ENCODE measurements at regions of chr1 and their contacts with region 1.

Region 1: DNA sequence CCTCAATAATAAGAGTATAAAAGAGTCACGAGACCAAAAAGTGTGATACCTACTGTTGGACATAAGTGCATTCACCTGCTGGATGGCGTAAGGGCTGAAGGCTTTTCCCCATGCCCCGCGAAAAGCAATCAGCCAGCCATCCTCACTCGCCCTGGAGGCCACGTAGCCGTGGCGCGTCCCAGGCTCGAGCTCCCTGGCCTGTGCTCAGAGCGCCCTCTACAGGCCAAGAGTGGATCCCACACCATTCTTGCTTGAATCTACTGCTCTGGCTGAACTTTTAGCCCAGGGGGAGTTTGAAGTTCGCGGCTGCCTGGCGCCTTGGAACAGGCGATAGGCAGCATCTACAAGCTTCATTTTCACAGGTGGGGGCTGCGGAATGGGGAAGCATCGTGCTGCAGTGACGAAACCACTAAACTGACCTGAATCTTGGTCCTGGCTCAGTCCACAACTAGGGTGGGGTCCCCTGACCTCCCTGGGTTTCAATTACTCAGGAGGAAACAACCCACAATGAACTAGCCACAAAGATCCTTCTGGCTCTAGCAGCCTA is 70.3 kb upstream of the SERBP1 start:
- DNase-seq: peak; percentile 31 to 91
- H3K4me3 ChIP-seq: no peak overlapping the region
- H3K27ac ChIP-seq: no peak overlapping the region
- H3K4me1 ChIP-seq: no peaks in the 10 kb centered on the region
- H3K27me3 ChIP-seq: no peaks in the 10 kb centered on the region
- CTCF ChIP-seq: peak; percentile 93 to 98 (median 96)

Region 2: GRCh38 chr1:66533804-66534740 is 966.4 kb before region 1 on chr1 and contains the start of gene SGIP1:
- intact Hi-C with region 1: no loop called
- DNase-seq: peak; percentile 46 to 88
- H3K4me3 ChIP-seq: peak within 1 kb of the TSS; percentile 58 to 71
- H3K27ac ChIP-seq: peak within 1 kb of the TSS; percentile 92 to 95
- H3K4me1 ChIP-seq: peaks cover 3 to 7% of the 10 kb centered on the region in 2 donors
- H3K27me3 ChIP-seq: no peaks in the 10 kb centered on the region
- CTCF ChIP-seq: no peak
- total RNA-seq, gene SGIP1: 1.6 TPM

Region 3: GRCh38 chr1:67214420-67215174 is 285.9 kb before region 1 on chr1:
- intact Hi-C with region 1: loop called (anchors 2 kb)
- DNase-seq: no peak
- H3K4me3 ChIP-seq: no peak overlapping the region
- H3K27ac ChIP-seq: no peak overlapping the region
- H3K4me1 ChIP-seq: no peaks in the 10 kb centered on the region
- H3K27me3 ChIP-seq: no peaks in the 10 kb centered on the region
- CTCF ChIP-seq: peak in 2 of 3 experiments; percentile 26 to 42

Region 4: DNA sequence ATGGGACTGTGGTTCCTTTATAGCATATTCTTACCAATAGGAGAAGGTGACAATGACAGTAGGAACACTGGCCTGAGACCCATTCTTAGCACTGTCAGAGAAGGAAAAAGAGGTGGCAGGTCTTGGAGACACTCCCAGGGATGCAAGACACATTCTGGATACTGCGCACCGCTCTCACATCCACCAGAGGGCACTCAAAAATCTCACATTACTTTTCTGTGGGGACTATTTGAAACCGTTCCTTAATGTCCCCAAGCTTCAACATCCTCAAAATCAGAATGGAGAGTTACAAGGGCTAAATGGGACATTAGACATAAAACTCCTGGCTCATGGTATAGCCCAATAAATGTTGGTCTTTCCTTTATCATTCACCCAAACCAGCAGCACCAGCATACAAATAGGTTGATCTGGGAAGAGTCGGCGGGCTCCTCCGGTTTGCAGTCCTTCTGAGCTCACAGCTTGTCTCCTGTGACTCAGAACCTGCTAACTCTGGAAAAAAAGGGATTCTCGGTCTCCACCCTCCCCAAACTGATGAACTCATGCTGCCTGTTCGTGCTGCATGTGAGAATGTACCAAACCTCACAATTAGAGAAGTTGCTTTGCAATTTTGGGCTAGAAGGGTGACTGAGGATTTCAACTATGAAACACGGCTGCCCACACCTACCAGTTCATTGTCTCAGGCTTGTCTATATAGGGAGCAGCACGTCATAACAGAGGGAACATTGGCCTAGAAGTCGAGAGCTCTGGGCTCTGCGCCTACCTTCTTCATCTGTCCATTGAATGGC is 152.6 kb before region 1 on chr1:
- intact Hi-C with region 1: loop called (anchors 1 kb)
- DNase-seq: no peak
- H3K4me3 ChIP-seq: no peak overlapping the region
- H3K27ac ChIP-seq: no peak overlapping the region
- H3K4me1 ChIP-seq: no peaks in the 10 kb centered on the region
- H3K27me3 ChIP-seq: no peaks in the 10 kb centered on the region
- CTCF ChIP-seq: peak; percentile 51 to 79 (median 53)

Region 5: GRCh38 chr1:67489643-67490042 is 10.8 kb before region 1 on chr1:
- intact Hi-C with region 1: no loop called
- DNase-seq: no peak
- H3K4me3 ChIP-seq: no peak overlapping the region
- H3K27ac ChIP-seq: no peak overlapping the region
- H3K4me1 ChIP-seq: no peaks in the 10 kb centered on the region
- H3K27me3 ChIP-seq: no peaks in the 10 kb centered on the region
- CTCF ChIP-seq: peak in 2 of 3 experiments; percentile 7 to 44

Region 6: GRCh38 chr1:68128157-68128556 is 627.7 kb after region 1 on chr1:
- intact Hi-C with region 1: no loop called
- DNase-seq: no peak
- H3K4me3 ChIP-seq: no peak overlapping the region
- H3K27ac ChIP-seq: peak overlapping the region in 1 of 2 donors; percentile 33
- H3K4me1 ChIP-seq: peaks cover 0 to 4% of the 10 kb centered on the region in 2 donors
- H3K27me3 ChIP-seq: no peaks in the 10 kb centered on the region
- CTCF ChIP-seq: no peak

Measured in ascending aorta (tissue), 2 donors.